AG04450 (cell line): ENCODE measurements at regions of chr15 and their contacts with region 1.

Region 1: DNA sequence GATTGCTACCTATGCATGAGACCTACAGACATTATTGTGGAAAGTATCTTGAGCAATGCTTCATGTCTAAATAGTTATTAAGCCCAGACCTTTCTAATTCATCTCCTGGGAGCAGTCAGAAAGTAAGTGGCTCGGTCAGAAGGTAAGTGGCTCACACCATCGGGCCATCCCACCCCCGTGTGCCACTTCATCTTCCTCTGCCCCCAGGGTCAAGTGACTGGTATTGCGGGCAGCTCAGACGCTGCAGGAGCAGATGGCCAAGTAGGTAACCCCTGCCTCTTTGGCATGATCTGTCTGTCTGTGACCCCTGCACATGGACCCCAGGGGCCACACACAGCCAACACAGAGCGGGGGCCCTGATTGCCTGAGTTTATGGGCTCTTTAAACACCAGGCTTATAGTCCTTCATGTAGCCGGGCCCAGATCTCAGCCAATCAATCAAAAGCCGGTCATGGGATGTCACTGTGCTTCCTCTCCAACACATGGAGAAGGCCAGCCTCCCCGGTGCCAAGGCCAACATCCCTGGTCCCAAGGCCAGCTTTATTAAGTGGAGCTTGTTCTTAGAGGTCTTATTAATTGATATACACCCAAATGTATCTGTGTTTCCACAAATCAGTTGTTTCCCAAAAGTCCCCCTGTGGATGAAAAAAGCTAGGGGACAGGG is 42.9 kb downstream of the LARP6 start:
- DNase-seq: no peak
- H3K4me3 ChIP-seq: no peak overlapping the region
- H3K27ac ChIP-seq: no peak overlapping the region
- H3K27me3 ChIP-seq: no peaks in the 10 kb centered on the region
- CTCF ChIP-seq: no peak

Region 2: GRCh38 chr15:70672081-70672480 is 139.0 kb before region 1 on chr15:
- CTCF ChIA-PET with region 1: interaction called, 30 read pairs
- POLR2A ChIA-PET with region 1: no interaction called
- DNase-seq: no peak
- H3K4me3 ChIP-seq: no peak overlapping the region
- H3K27ac ChIP-seq: no peak overlapping the region
- H3K27me3 ChIP-seq: no peaks in the 10 kb centered on the region
- CTCF ChIP-seq: no peak

Region 3: DNA sequence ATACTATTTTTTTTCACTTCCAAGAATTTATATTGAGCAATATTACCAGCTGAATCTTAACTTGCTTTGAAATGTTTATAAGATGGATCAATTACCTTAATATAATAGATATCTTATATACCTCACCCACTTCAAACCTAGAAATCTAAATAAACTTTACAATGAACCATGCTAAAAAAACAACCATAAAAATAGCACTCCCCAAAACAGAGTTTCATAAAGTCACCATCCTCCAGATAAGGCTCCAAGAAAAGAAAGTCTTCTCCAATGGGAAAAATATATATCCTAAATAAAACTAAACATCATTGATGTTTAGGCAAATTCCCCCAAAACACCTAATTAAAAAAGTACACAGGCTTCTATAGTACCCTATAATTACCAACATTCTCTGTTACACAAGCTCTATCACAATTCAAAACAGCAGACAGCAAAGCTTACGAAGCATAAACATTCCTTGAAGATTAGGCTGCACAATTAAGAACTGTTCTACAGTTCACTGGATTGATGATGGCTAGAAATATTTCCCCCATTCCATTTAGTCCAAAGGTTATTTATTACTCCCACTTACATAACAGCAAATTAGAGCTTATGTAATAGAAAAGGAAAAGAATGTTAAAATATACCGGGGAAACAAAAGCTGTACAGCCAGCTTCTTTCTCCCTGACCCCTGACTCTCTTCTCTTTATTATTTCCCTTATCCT is 97.2 kb before region 1 on chr15:
- CTCF ChIA-PET with region 1: interaction called, 19 read pairs
- POLR2A ChIA-PET with region 1: no interaction called
- DNase-seq: no peak
- H3K4me3 ChIP-seq: no peak overlapping the region
- H3K27ac ChIP-seq: no peak overlapping the region
- H3K27me3 ChIP-seq: no peaks in the 10 kb centered on the region
- CTCF ChIP-seq: no peak

Region 4: DNA sequence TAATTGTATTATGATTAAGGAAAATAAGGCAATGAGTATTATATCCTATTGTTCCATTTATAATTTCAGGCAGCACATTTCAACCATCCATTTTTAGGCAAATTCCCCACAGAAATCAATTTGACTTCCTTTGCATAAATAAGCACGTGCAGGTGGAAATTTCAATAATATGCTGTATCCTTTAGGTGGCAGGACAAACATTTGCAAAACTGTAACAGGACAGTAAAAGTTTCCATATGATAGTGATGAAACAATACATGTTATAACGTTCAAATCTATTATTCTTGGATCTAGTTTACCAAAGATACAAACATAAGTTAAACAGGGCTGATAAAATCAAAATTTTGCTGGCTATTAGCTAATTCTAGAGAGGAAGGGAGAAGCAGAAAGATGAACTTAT is 56.2 kb before region 1 on chr15:
- CTCF ChIA-PET with region 1: interaction called, 18 read pairs
- POLR2A ChIA-PET with region 1: no interaction called
- DNase-seq: no peak
- H3K4me3 ChIP-seq: no peak overlapping the region
- H3K27ac ChIP-seq: no peak overlapping the region
- H3K27me3 ChIP-seq: no peaks in the 10 kb centered on the region
- CTCF ChIP-seq: 0 out of 2 replicates have a peak, but pooled peaks have one; percentile 3

Region 5: GRCh38 chr15:70799667-70800450 is 11.2 kb before region 1 on chr15:
- CTCF ChIA-PET with region 1: interaction called, 16 read pairs
- POLR2A ChIA-PET with region 1: interaction called, 7 read pairs
- DNase-seq: peak; percentile 95
- H3K4me3 ChIP-seq: no peak overlapping the region
- H3K27ac ChIP-seq: peak overlapping the region; percentile 92
- H3K27me3 ChIP-seq: no peaks in the 10 kb centered on the region
- CTCF ChIP-seq: no peak

Region 6: DNA sequence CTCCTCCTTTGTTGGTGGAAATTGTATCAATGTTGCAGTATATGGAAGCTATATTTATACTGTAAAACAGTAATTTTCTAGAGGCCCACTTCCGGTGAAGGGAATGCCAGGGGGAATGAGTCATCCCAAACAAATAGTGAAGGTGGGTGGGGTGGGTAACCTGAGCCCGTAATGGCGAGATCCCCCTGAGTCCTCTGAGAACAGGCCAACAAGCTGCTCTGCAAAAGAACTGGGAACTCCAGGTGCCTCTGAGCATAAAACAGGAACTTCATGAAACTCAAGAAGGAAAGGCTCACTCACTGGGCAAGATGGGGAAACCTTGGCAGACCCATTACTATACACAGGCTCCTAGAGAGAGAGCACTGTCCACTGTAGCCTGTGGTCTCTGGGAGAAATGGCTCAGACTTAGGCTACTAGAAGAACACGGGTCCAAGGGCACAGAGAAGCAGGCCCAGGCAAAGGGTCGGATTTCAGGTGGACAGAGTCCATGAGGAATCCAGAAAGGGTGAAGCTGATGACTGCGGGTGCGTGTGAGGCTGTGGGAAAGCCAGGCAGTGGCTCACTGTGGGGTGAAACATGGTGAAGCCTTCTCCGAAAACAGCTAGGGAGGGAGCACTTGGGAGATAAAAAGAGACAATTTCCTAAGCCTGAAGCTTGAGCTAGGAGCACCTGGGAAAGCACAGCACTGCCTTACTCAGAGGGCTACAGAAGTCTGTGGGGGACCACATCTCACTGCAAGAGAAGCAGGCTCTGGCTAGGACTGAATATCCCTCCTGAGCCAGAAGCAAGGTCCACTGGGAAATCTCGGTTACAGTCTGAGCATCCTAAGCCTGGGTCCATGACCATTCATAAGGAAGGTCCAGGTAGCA is 23.1 kb after region 1 on chr15:
- CTCF ChIA-PET with region 1: interaction called, 22 read pairs
- POLR2A ChIA-PET with region 1: no interaction called
- DNase-seq: peak; percentile 67
- H3K4me3 ChIP-seq: no peak overlapping the region
- H3K27ac ChIP-seq: peak overlapping the region; percentile 89
- H3K27me3 ChIP-seq: no peaks in the 10 kb centered on the region
- CTCF ChIP-seq: no peak

Region 7: DNA sequence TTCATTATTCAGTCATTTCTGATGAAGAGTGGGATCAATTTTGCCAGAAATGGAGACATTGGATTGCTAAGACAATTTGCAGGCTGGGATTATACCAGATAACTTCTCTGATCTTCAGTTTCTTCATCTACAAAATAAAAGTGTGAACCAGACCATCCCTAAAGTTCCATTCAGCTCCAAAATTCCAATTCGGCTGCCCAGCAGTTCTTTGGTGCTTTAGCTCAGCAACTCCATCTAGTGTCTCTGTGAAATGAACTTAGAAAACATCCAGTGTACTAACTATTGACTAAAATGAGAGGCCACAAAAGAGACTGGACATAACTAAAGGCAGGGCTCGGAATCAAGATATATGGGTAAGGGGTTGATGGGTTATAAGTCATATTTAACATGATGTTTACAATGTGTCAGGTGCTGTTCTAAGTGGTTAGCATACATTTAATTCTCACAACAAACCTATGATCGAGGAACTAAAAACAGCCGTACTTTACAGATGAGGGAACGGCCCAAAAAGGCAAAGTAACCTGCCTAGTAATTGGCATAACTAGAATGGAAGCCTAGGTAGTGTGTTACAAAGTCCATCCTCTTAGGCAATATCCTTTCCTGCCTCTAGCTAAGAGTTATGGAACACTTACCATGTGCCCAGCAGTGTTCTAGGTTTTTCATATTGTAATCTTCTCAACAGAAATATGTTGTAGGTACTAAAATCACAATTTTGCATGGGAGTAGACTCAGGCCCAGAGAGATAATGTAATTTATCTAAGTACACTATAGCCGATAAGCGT is 64.1 kb after region 1 on chr15:
- CTCF ChIA-PET with region 1: interaction called, 18 read pairs
- POLR2A ChIA-PET with region 1: no interaction called
- DNase-seq: no peak
- H3K4me3 ChIP-seq: no peak overlapping the region
- H3K27ac ChIP-seq: no peak overlapping the region
- H3K27me3 ChIP-seq: no peaks in the 10 kb centered on the region
- CTCF ChIP-seq: peak; percentile 77